Natural killer cell (primary cell): ENCODE measurements at regions of chr9 and their contacts with region 1.

Region 1: GRCh38 chr9:135410831-135411473 is 68.6 kb upstream of the PPP1R26 start:
- DNase-seq: no peak
- ATAC-seq: no peak
- H3K4me3 ChIP-seq: no peak overlapping the region
- H3K4me3 Mint-ChIP-seq: no peak overlapping the region
- H3K27ac ChIP-seq: no peak overlapping the region
- H3K27ac Mint-ChIP-seq: no peak overlapping the region
- H3K4me1 ChIP-seq: no peaks in the 10 kb centered on the region
- H3K4me1 Mint-ChIP-seq: no peaks in the 10 kb centered on the region
- H3K27me3 ChIP-seq: no peaks in the 10 kb centered on the region
- H3K27me3 Mint-ChIP-seq: peaks cover 0 to 2% of the 10 kb centered on the region in 2 donors
- CTCF ChIP-seq: no peak

Region 2: GRCh38 chr9:134454476-134454857 is 956.5 kb before region 1 on chr9:
- intact Hi-C with region 1: loop called (anchors 5 kb)
- DNase-seq: no peak
- ATAC-seq: no peak
- H3K4me3 ChIP-seq: no peak overlapping the region
- H3K4me3 Mint-ChIP-seq: no peak overlapping the region
- H3K27ac ChIP-seq: no peak overlapping the region
- H3K27ac Mint-ChIP-seq: peak overlapping the region; percentile 93 to 95
- H3K4me1 ChIP-seq: peaks cover 26% of the 10 kb centered on the region
- H3K4me1 Mint-ChIP-seq: peaks cover 13 to 23% of the 10 kb centered on the region in 2 donors
- H3K27me3 ChIP-seq: no peaks in the 10 kb centered on the region
- H3K27me3 Mint-ChIP-seq: no peaks in the 10 kb centered on the region
- CTCF ChIP-seq: no peak

Region 3: DNA sequence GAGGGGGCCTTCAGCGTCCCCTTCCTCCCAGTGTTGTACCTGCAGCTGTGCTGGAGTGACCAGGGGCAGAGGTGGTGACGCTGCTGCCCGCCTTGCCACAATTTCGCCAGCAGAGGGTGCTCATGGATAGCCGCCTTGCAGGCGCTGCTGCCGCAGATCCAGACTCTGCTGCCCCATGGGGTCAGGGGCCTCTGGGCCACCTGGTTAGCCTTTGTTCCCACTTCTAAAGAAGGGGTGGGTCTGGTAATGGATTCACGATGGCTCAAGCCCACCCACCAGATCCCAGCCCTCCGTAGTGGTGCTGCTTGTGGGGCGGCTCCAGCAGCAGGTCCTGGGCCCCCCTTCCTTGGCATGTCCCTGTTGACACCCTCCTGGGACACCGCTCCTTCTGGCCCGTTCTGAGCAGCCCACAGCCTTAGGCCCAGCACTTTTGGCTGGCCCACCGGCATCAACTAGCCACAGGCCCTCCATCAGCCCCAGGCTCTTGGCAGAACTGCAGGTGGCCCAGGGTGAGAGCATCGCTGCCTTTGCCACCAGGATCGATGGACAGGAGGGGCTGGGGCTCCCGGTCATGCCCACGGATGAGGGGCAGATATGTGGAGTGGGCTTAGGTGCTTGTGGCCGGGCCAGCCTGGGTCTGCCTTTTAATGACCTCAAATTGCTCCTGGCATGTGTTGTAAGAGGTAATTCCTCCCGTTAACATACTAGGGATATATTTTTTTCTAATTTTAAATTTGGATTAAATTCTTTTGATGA is 712.2 kb before region 1 on chr9:
- intact Hi-C with region 1: loop called (anchors 5 kb)
- DNase-seq: peak; percentile 44 to 53
- ATAC-seq: peak in 2 of 3 donors; percentile 46 to 80
- H3K4me3 ChIP-seq: no peak overlapping the region
- H3K4me3 Mint-ChIP-seq: no peak overlapping the region
- H3K27ac ChIP-seq: no peak overlapping the region
- H3K27ac Mint-ChIP-seq: no peak overlapping the region
- H3K4me1 ChIP-seq: no peaks in the 10 kb centered on the region
- H3K4me1 Mint-ChIP-seq: no peaks in the 10 kb centered on the region
- H3K27me3 ChIP-seq: no peaks in the 10 kb centered on the region
- H3K27me3 Mint-ChIP-seq: no peaks in the 10 kb centered on the region
- CTCF ChIP-seq: peak; percentile 69